ENCODE measurements at regions of chr12 and their contacts with region 1.

Region 1: GRCh38 chr12:121550974-121551634 is 29.7 kb downstream of the KDM2B start:
- DNase-seq: no peak
- ATAC-seq: no peak
- H3K4me3 Mint-ChIP-seq: no peak overlapping the region
- H3K27ac Mint-ChIP-seq: no peak overlapping the region
- H3K4me1 Mint-ChIP-seq: peaks cover 24% of the 10 kb centered on the region
- H3K27me3 Mint-ChIP-seq: no peaks in the 10 kb centered on the region
- CTCF ChIP-seq: no peak

Region 2: DNA sequence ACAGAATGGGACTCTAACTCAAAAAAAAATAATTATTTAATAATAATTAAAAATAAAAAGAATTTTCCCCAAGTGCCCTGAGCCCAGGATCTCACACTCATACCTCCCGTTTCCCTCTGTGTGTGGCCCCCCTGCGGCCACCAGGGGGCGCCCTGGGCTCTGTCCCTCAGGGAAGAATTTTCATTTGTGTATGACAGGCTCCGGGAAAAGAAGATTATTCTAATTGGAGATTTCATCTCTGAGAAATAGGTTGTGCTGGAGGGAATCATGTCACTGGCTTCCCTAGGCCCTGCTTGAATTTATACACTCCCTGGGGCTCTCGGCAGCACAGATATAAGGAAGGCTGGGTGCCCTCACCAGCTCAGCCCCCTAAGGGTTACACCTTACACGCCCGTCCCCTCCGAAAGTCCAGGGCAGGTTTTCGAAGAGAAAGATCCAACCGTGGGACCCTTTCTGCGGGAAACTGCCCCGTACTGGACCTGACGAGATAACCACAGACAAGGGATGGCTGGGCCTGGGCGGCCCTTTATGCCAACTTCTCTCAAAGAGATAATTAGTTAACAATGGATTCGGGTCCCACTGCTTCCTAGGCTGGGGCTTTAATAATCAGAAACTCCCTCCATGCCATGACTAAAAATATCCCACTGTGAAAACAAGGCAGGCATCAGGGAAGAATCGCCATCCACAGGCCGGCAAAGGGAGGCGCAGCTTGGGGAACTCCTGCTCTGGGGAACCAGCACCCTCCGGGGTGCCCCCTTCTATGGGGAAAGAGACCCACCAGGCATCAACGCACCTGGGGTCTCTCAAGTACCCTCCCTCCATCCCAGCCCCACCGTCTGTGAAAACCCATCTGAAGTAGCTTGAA is 50.9 kb before region 1 on chr12:
- CTCF ChIA-PET with region 1: interaction called, 15 read pairs
- POLR2A ChIA-PET with region 1: no interaction called
- intact Hi-C with region 1: loop called (anchors 5 kb)
- DNase-seq: peak; percentile 69
- ATAC-seq: peak; percentile 82
- H3K4me3 Mint-ChIP-seq: no peak overlapping the region
- H3K27ac Mint-ChIP-seq: no peak overlapping the region
- H3K4me1 Mint-ChIP-seq: peaks cover 17% of the 10 kb centered on the region
- H3K27me3 Mint-ChIP-seq: no peaks in the 10 kb centered on the region
- CTCF ChIP-seq: peak; percentile 82

Region 3: GRCh38 chr12:121637231-121637914 is 86.3 kb after region 1 on chr12:
- CTCF ChIA-PET with region 1: interaction called, 11 read pairs
- POLR2A ChIA-PET with region 1: interaction called, 5 read pairs
- intact Hi-C with region 1: no loop called
- DNase-seq: peak; percentile 52
- ATAC-seq: peak; percentile 88
- H3K4me3 Mint-ChIP-seq: peak overlapping the region; percentile 53
- H3K27ac Mint-ChIP-seq: peak overlapping the region; percentile 84
- H3K4me1 Mint-ChIP-seq: peaks cover 50% of the 10 kb centered on the region
- H3K27me3 Mint-ChIP-seq: no peaks in the 10 kb centered on the region
- CTCF ChIP-seq: no peak

Region 4: GRCh38 chr12:121678716-121679580 is 127.8 kb after region 1 on chr12:
- CTCF ChIA-PET with region 1: interaction called, 71 read pairs
- POLR2A ChIA-PET with region 1: no interaction called
- intact Hi-C with region 1: loop called (anchors 1 kb)
- DNase-seq: no peak
- ATAC-seq: no peak
- H3K4me3 Mint-ChIP-seq: no peak overlapping the region
- H3K27ac Mint-ChIP-seq: no peak overlapping the region
- H3K4me1 Mint-ChIP-seq: no peaks in the 10 kb centered on the region
- H3K27me3 Mint-ChIP-seq: no peaks in the 10 kb centered on the region
- CTCF ChIP-seq: no peak

Region 5: DNA sequence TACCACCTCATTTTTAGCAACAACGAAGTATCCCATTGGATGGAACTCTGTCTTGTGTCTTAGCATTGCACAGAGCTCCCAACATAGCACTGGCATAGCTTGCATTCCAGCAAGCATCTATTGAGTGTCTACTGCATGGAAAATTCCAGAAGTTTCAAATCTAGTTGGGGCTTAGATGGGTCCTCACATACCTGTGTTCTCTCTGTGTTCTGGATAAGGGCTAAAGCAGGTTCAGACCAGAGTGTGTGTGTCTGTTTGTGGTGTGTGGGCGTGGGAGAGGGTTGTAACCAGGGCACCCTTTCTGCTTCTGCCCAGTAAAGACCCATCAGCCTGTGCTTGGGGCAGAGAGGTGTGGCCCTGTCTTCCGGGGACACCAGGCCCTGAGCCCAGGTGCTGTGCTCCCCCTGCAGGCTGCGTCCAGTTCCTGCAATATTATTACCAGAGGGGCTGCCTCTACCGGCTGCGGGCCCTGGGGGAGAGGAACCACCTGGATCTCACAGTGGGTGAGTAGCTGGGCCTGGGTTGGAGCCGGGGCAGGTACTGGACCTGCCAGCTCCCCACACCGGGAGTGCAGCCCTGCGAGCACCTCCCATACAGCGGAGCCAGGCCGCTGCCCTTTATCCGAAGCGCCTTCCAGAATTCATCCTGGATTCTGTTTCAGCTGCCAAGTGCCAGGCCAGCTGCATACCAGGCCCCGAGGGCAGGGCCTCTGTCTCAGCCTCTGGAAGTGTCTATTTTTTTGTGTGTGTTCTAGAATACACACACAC is 222.1 kb after region 1 on chr12:
- CTCF ChIA-PET with region 1: interaction called, 8 read pairs
- POLR2A ChIA-PET with region 1: no interaction called
- intact Hi-C with region 1: loop called (anchors 1 kb)
- DNase-seq: peak; percentile 72
- ATAC-seq: peak; percentile 91
- H3K4me3 Mint-ChIP-seq: no peak overlapping the region
- H3K27ac Mint-ChIP-seq: peak overlapping the region; percentile 66
- H3K4me1 Mint-ChIP-seq: peaks cover 17% of the 10 kb centered on the region
- H3K27me3 Mint-ChIP-seq: no peaks in the 10 kb centered on the region
- CTCF ChIP-seq: no peak

Region 6: DNA sequence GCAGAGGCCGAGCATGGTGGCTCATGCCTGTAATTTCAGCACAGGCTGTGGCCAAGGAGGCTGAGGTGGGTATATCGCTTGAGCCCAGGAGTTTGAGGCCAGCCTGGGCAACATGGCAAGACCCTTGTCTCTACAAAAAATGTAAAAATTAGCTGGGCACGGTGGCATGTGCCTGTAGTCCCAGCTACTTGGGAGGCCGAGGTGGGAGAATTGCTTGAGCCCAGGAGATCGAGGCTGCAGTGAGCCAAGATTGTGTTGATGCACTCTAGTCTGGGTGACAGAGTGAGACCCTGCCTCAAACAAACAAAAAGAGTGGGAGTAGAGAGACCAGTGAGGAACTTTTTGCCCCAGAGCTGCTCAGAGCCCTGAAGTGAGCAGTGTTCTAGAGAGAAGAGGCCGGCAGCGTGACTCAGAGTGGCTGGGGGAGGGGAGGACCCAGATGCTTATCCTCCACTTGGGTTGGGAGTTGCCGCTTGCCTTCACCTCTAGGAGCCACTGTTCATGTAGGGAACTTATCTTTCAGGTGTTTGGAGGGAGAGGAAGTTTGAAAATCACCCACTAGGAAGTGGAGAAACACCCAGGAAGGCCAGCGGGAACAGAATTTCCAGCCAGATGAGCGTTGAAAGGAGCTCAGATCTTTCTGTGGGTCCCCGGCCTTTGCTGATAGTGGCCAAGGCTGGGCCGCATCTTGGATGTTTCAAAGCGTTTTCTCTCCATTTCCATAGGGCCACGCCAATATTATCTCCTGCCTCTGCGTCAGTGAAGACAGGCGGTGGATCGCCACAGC is 382.6 kb after region 1 on chr12:
- CTCF ChIA-PET with region 1: no interaction called
- POLR2A ChIA-PET with region 1: no interaction called
- intact Hi-C with region 1: no loop called
- DNase-seq: no peak
- ATAC-seq: no peak
- H3K4me3 Mint-ChIP-seq: no peak overlapping the region
- H3K27ac Mint-ChIP-seq: no peak overlapping the region
- H3K4me1 Mint-ChIP-seq: peaks cover 20% of the 10 kb centered on the region
- H3K27me3 Mint-ChIP-seq: no peaks in the 10 kb centered on the region
- CTCF ChIP-seq: no peak

Region 7: GRCh38 chr12:122107261-122107660 is 556.2 kb after region 1 on chr12:
- CTCF ChIA-PET with region 1: no interaction called
- POLR2A ChIA-PET with region 1: no interaction called
- intact Hi-C with region 1: no loop called
- DNase-seq: no peak
- ATAC-seq: no peak
- H3K4me3 Mint-ChIP-seq: no peak overlapping the region
- H3K27ac Mint-ChIP-seq: no peak overlapping the region
- H3K4me1 Mint-ChIP-seq: peaks cover 50% of the 10 kb centered on the region
- H3K27me3 Mint-ChIP-seq: no peaks in the 10 kb centered on the region
- CTCF ChIP-seq: no peak

Measured in activated B cell treated with CpG ODN at 0.5 μM for 24 hours (primary cell).